Thyroid gland (tissue), 4 donors: ENCODE measurements at regions of chr9 and their contacts with region 1.

Region 1: GRCh38 chr9:125407974-125408900 is 146.6 kb downstream of the GAPVD1 start:
- DNase-seq: peak; percentile 68 to 74
- H3K4me3 ChIP-seq: peak overlapping the region; percentile 10 to 39 (median 35)
- H3K27ac ChIP-seq: no peak overlapping the region
- H3K4me1 ChIP-seq: peaks cover 4% of the 10 kb centered on the region in 2 donors
- H3K27me3 ChIP-seq: no peaks in the 10 kb centered on the region
- CTCF ChIP-seq: peak; percentile 65 to 91 (median 80)
- POLR2A ChIP-seq: no peak

Region 2: GRCh38 chr9:125631391-125632085 is 223.3 kb after region 1 on chr9:
- intact Hi-C with region 1: loop called (anchors 2 kb)
- DNase-seq: peak in 1 of 2 donors; percentile 30
- H3K4me3 ChIP-seq: no peak overlapping the region
- H3K27ac ChIP-seq: no peak overlapping the region
- H3K4me1 ChIP-seq: peaks cover 0 to 19% of the 10 kb centered on the region in 2 donors
- H3K27me3 ChIP-seq: no peaks in the 10 kb centered on the region
- CTCF ChIP-seq: peak in 5 of 6 experiments; percentile 47 to 63 (median 58)
- POLR2A ChIP-seq: no peak

Region 3: DNA sequence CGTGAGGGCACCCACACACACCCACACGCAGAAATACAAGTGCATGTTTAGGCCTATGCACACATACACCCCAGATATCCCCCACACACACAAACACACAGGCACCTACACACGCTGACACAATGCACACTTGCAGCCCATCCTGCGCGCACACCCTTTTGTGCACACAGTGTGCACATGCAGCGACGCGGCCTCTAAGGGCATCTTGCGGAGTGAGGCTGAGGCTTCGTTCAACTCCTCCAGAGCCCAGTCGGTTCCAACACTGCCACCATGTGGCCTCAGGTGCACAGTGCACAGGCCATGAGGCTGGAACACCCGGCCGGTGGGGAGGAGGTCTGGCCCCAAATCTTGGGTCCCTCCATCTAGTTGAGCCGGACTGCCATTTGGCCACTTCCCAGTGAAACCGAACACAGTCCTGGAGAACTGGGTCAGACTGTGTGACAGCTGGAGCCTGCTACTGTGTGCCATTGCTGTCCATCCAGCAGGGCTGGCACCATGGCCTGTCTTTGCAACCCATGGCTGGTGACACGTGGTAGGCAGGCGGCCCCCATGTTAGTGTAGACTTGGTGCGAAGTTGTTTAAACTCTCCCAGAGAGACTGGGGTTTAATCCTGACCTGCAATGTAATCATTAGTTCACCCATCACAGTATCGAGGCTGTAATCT is 820.7 kb after region 1 on chr9:
- intact Hi-C with region 1: loop called (anchors 5 kb)
- DNase-seq: peak; percentile 63 to 72
- H3K4me3 ChIP-seq: no peak overlapping the region
- H3K27ac ChIP-seq: no peak overlapping the region
- H3K4me1 ChIP-seq: no peaks in the 10 kb centered on the region
- H3K27me3 ChIP-seq: no peaks in the 10 kb centered on the region
- CTCF ChIP-seq: peak; percentile 84 to 94 (median 88)
- POLR2A ChIP-seq: no peak